ENCODE measurements at regions of chr6 and their contacts with region 1.

Region 1: DNA sequence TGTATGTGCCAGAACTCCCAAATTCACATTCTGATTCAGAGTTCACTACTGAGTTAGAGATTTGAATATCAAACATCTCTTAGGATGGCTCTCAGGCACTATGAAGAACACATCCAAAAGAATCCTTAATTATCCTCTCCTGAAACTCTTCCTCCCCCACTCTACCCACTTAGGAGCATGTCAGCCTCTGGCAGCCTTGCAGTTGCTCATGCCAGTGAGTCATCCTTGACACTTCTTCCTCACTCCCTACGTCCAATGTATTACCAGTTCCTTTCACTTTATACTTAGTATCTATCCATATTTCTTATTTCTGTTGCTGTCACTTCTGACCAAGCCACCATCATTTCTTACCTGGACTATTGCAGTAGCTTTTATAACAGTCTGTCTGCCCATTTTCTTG is 192.0 kb upstream of the IMPG1 start:
- DNase-seq: no peak
- ATAC-seq: no peak
- H3K4me3 ChIP-seq: no peak overlapping the region
- H3K4me3 Mint-ChIP-seq: no peak overlapping the region
- H3K27ac ChIP-seq: no peak overlapping the region
- H3K27ac Mint-ChIP-seq: no peak overlapping the region
- H3K4me1 ChIP-seq: no peaks in the 10 kb centered on the region
- H3K4me1 Mint-ChIP-seq: no peaks in the 10 kb centered on the region
- H3K27me3 ChIP-seq: no peaks in the 10 kb centered on the region
- H3K27me3 Mint-ChIP-seq: no peaks in the 10 kb centered on the region
- CTCF ChIP-seq: no peak

Region 2: DNA sequence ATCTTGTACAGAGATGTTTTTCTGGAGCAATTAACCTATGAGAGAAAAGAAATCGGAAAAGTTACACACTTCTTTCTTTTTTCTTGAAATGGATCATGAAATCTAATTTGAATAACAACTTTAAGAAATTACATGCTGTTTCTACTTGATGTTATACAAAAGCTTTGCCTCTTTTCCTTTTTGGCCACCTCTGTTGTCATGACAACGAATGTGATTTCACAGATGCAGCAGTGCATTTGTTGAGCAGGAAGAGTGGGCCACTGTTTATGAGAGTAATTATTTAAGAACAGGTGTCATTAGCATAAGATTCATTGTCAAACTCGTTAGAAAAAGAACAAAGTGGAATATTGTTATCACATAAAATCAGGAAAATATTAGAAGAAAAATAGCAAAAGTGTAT is 43.7 kb before region 1 on chr6:
- CTCF ChIA-PET with region 1: no interaction called
- POLR2A ChIA-PET with region 1: no interaction called
- intact Hi-C with region 1: loop called in 1 of 2 experiments (anchors 1 kb)
- DNase-seq: no peak
- ATAC-seq: no peak
- H3K4me3 ChIP-seq: no peak overlapping the region
- H3K4me3 Mint-ChIP-seq: no peak overlapping the region
- H3K27ac ChIP-seq: no peak overlapping the region
- H3K27ac Mint-ChIP-seq: no peak overlapping the region
- H3K4me1 ChIP-seq: no peaks in the 10 kb centered on the region
- H3K4me1 Mint-ChIP-seq: no peaks in the 10 kb centered on the region
- H3K27me3 ChIP-seq: no peaks in the 10 kb centered on the region
- H3K27me3 Mint-ChIP-seq: no peaks in the 10 kb centered on the region
- CTCF ChIP-seq: no peak

Region 3: DNA sequence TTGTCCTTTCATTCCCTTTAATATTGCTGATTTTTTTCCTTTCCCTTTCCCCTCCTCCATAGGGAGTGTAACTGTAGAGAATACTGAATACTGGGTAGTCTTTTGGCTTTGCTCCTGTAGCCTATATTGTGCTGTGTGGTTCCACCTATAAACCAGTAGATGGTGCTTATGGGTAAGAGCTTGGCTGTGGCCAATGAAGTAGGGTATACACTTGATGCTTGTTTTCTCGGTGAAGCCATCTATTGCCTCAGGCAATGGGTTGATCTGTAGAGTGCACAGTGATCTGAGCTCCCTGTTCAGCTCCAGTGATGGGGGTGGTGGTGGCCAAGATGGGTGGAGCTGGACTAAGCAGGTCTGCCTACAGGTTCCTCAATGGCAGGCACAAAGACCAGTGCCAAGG is 11.3 kb after region 1 on chr6:
- CTCF ChIA-PET with region 1: no interaction called
- POLR2A ChIA-PET with region 1: no interaction called
- intact Hi-C with region 1: no loop called
- DNase-seq: no peak
- ATAC-seq: no peak
- H3K4me3 ChIP-seq: no peak overlapping the region
- H3K4me3 Mint-ChIP-seq: no peak overlapping the region
- H3K27ac ChIP-seq: no peak overlapping the region
- H3K27ac Mint-ChIP-seq: no peak overlapping the region
- H3K4me1 ChIP-seq: no peaks in the 10 kb centered on the region
- H3K4me1 Mint-ChIP-seq: no peaks in the 10 kb centered on the region
- H3K27me3 ChIP-seq: no peaks in the 10 kb centered on the region
- H3K27me3 Mint-ChIP-seq: no peaks in the 10 kb centered on the region
- CTCF ChIP-seq: no peak

Measured in CD8-positive, alpha-beta T cell (primary cell).